HAP-1 (cell line): ENCODE measurements at regions of chr20 and their contacts with region 1.

Region 1: GRCh38 chr20:49132995-49133478 is 55.1 kb downstream of the STAU1 start:
- DNase-seq: peak; percentile 53 to 71
- H3K4me3 ChIP-seq: no peak overlapping the region
- H3K4me1 ChIP-seq: no peaks in the 10 kb centered on the region
- H3K27me3 ChIP-seq: no peaks in the 10 kb centered on the region

Region 2: GRCh38 chr20:49219089-49219923 is 86.3 kb after region 1 on chr20 and contains the start of gene DDX27:
- in situ Hi-C with region 1: loop called (anchors 5 kb)
- DNase-seq: peak; percentile 93 to 97
- H3K4me3 ChIP-seq: peak within 1 kb of the TSS; percentile 81
- H3K4me1 ChIP-seq: peaks cover 8% of the 10 kb centered on the region
- H3K27me3 ChIP-seq: no peaks in the 10 kb centered on the region